ENCODE measurements at regions of chr1 and their contacts with region 1.

Region 1: DNA sequence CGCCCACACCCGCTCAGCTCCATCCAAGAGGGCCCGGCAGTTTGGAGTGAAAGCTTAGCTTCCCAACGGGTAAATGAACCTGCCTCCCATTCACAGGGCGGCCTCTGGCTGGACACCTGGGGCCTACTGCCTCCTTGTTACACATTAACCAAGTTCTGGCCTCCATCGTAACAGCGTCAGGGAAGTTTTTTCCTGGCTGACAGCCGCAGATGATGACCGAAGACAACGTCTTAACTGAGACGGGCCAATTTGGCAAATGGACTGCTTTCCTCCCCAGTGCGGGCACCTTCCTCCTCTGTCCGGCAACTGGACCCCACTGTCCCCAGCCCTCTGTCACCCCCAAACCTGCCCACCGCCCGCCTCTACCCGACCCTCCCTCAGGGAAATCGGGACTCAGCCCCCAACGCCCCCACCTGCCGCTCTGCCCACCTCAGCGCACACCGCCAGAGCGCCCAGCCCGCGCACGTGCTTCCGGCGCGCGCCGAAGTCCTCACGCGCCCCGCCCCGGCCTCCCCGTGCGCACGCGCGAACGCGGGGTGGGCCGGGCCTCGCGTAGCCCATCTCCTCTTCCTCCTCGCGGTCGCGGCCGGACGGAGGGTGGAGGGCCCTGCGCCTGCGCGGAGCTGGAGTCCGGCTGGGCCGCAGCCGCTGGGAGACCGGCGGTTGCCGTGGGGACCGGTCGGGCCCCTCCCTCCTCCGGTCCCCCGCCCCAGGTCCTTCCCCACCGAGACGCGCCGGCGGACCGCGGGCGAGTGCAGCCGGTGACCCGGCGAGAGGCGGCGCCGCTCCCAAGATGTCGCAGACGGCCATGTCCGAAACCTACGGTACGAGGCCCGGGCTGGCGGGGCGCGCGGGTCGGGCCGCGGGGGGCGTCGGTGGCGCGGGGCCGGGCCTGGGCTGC is at the start of gene RAB4A:
- DNase-seq: peak; percentile 89 to 96 (median 91)
- ATAC-seq: peak; percentile 80 to 97 (median 95)
- H3K4me3 ChIP-seq: peak within 1 kb of the TSS; percentile 55 to 91 (median 72)
- H3K27ac ChIP-seq: peak within 1 kb of the TSS; percentile 78 to 89 (median 85)
- H3K4me1 ChIP-seq: peaks cover 2 to 48% (median 38%) of the 10 kb centered on the region in 12 donors
- H3K27me3 ChIP-seq: no peaks in the 10 kb centered on the region
- CTCF ChIP-seq: no peak
- POLR2A ChIP-seq: peak; percentile 22 to 81
- total RNA-seq, gene RAB4A: 33.6 to 159 (median 121) TPM

Region 2: DNA sequence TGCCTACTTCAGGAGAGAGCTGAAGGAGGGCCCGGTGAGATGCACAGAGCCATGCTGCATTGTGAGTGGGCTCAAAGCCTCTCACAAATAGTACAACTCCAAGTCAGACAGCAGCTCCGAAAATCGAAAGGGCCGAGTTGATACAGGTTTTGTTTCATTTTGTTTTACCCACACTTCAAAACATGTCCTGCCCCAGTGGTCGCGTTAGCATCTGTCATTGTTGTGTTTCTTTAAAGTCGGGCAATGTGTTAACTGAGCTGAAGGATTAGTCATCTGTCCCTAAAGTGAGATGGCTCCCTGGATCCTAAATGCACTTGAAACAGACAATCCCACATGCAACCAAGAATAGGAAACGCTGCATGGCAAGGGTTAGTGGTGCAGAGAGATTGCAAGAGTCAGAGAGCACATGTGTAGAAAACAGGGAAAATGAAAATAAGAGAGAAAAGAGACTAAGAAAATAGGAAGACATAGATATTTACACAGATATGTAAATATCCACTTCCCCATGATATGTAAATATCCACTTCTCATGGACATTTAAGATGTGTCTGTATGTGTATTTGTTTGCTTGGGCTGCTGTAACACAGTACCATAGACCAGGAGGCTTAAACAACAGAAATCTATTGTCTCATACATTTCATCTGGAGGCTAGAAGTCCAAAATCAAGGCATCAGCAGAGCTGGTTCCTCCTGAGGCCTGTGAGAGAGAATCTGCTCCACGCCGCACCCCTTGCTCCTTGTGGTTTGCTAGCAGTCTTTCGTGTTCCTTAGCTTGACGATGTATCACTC is 131.3 kb before region 1 on chr1:
- intact Hi-C with region 1: no loop called
- DNase-seq: no peak
- ATAC-seq: no peak
- H3K4me3 ChIP-seq: no peak overlapping the region
- H3K27ac ChIP-seq: no peak overlapping the region
- H3K4me1 ChIP-seq: peaks cover 0 to 20% (median 0%) of the 10 kb centered on the region in 12 donors
- H3K27me3 ChIP-seq: peaks cover 0 to 4% (median 0%) of the 10 kb centered on the region in 9 donors
- CTCF ChIP-seq: no peak
- POLR2A ChIP-seq: no peak

Region 3: GRCh38 chr1:229296541-229296941 is 25.7 kb after region 1 on chr1:
- intact Hi-C with region 1: loop called in 1 of 10 experiments (anchors 2 kb)
- DNase-seq: peak in 3 of 5 donors; percentile 18 to 74 (median 60)
- ATAC-seq: peak; percentile 70 to 89 (median 88)
- H3K4me3 ChIP-seq: no peak overlapping the region
- H3K27ac ChIP-seq: peak overlapping the region in 8 of 12 donors; percentile 6 to 78 (median 60)
- H3K4me1 ChIP-seq: peaks cover 0 to 13% (median 3%) of the 10 kb centered on the region in 12 donors
- H3K27me3 ChIP-seq: no peaks in the 10 kb centered on the region
- CTCF ChIP-seq: no peak
- POLR2A ChIP-seq: no peak

Region 4: DNA sequence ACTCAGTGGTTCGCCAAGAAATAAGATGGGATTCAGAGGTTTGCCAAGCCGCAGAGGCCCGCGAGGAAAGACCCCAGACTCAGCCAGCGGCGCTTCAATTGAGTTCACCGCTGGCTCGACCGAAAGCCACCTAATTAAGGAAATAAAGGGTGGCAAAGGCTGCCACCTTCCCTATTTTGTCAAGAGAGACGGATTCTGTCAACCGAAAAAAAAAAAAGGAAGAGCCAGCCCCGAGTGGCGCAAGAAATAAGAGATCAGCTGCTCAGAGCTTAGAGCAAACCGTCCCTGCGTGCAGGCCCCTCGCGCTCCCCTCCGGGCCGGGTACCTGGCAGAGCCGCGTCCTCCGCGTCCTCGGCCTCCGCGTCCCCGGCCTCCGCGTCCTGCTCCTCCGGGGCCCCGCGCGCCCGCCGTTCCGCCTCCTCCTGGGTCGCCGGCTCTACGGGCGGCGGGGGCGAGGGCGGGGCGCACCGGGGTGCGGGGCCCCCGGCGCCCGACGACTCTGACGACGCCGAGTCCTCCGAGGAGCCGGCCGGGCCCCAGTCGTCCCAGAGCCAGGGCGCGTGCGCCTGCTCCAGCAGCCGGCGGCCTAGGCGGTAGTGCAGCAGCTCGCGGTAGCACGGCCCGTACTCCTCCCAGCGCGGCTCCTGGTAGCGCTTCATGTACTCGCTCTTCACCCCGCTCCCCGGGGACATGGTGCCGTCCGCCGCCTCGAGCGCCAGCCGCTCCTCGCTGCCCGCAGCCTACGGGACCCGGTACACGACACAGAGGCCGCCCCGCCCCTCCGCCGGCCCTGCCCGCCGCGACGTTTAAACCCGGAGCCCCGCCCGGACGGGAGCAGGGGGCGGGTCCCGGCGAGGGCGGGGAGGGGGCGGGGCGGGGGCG is 71.2 kb after region 1 on chr1:
- intact Hi-C with region 1: loop called in 3 of 10 experiments (anchors 2 to 5 kb)
- DNase-seq: peak; percentile 85 to 93 (median 89)
- ATAC-seq: peak; percentile 88 to 98 (median 96)
- H3K4me3 ChIP-seq: peak overlapping the region; percentile 69 to 99 (median 92)
- H3K27ac ChIP-seq: peak overlapping the region; percentile 55 to 97 (median 92)
- H3K4me1 ChIP-seq: peaks cover 0 to 45% (median 14%) of the 10 kb centered on the region in 12 donors
- H3K27me3 ChIP-seq: no peaks in the 10 kb centered on the region
- CTCF ChIP-seq: no peak
- POLR2A ChIP-seq: no peak

Region 5: GRCh38 chr1:229396595-229397206 is 125.9 kb after region 1 on chr1:
- intact Hi-C with region 1: no loop called
- DNase-seq: no peak
- ATAC-seq: no peak
- H3K4me3 ChIP-seq: no peak overlapping the region
- H3K27ac ChIP-seq: no peak overlapping the region
- H3K4me1 ChIP-seq: no peaks in the 10 kb centered on the region
- H3K27me3 ChIP-seq: peaks cover 0 to 13% (median 0%) of the 10 kb centered on the region in 9 donors
- CTCF ChIP-seq: no peak
- POLR2A ChIP-seq: no peak

Region 6: DNA sequence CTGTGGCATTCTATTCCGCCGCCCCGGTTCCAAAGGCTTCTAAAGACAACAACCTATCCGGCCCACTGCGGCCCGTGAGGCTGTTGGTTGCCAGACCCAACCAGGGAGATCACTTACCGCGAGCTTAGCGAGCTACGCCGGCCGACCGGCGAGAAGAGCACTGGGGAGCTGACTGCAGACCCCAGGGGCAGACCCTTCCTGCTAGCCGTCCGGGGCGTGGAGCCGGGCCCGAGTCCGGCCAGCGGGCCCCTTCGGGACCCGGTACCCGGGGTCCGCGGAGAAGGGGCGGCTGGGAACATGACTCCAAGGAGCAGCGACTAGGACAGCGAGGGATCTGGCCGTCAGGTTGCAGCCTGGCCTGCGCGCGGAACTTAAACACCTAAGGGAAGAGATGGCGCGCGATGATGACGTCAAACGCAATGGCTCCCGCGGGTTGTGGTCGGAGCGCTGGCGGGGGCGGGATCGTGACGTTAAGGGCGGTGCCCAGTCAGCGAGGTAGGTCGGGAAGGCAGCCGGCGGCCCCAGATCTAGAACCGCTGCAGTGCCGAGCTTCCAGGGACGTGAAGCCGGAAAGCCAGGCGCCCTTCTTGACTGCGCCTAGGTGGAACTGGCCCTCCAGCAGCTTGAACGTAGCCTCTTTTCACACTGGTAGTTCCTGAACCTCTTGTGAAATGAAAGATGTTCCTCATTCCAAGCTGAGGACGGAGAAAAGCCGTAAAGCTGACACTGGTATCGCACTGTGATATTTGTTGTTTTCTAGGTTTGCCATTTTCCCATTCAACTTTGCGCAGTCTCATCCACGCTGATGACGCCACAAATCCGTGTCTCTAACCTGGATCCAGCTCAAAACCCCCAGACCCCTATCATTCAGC is 237.4 kb after region 1 on chr1 and contains the start of gene NUP133:
- intact Hi-C with region 1: loop called in 2 of 10 experiments (anchors 2 to 5 kb)
- DNase-seq: peak; percentile 99 to 100 (median 99)
- ATAC-seq: peak; percentile 97 to 100 (median 98)
- H3K4me3 ChIP-seq: peak within 1 kb of the TSS; percentile 64 to 99 (median 91)
- H3K27ac ChIP-seq: peak within 1 kb of the TSS; percentile 82 to 98 (median 94)
- H3K4me1 ChIP-seq: peaks cover 0 to 23% (median 16%) of the 10 kb centered on the region in 12 donors
- H3K27me3 ChIP-seq: no peaks in the 10 kb centered on the region
- CTCF ChIP-seq: peak in 1 of 12 donors; percentile 8
- POLR2A ChIP-seq: peak; percentile 44 to 91
- total RNA-seq, gene NUP133: 23.1 to 37.3 (median 31.0) TPM

Measured in heart left ventricle (tissue), 16 donors.